Activated CD4-positive, alpha-beta T cell treated with anti-CD3 and anti-CD28 coated beads for 36 hours (primary cell): ENCODE measurements at regions of chr7 and their contacts with region 1.

Region 1: GRCh38 chr7:135942614-135943013 is 34.5 kb downstream of the MTPN start:
- DNase-seq: no peak
- ATAC-seq: peak; percentile 26
- H3K4me3 Mint-ChIP-seq: no peak overlapping the region
- H3K27ac Mint-ChIP-seq: no peak overlapping the region
- H3K4me1 Mint-ChIP-seq: peaks cover 57% of the 10 kb centered on the region
- H3K27me3 Mint-ChIP-seq: no peaks in the 10 kb centered on the region

Region 2: GRCh38 chr7:135964274-135964673 is 21.7 kb after region 1 on chr7:
- CTCF ChIA-PET with region 1: interaction called, 3 read pairs
- POLR2A ChIA-PET with region 1: no interaction called
- intact Hi-C with region 1: loop called in 1 of 2 experiments (anchors 2 kb)
- DNase-seq: no peak
- ATAC-seq: no peak
- H3K4me3 Mint-ChIP-seq: no peak overlapping the region
- H3K27ac Mint-ChIP-seq: no peak overlapping the region
- H3K4me1 Mint-ChIP-seq: peaks cover 70% of the 10 kb centered on the region
- H3K27me3 Mint-ChIP-seq: no peaks in the 10 kb centered on the region

Region 3: DNA sequence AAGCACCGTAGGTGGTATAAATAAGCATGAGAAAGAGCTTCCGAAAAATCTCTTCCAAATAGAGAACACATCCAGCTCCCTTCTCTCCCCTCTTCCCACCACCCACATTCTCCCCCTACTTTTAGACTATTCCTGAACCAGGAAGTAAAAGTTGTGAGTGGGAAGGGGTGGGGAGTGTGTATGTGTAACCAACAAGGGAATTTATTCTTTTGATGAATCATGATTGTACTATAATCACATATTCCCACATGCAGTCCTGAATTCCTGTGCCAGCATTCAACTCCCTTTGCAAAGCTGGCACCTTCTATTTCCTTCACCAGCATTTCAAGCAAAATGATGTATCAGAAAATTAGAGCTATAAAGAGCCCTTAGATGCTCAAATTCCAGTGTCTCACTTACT is 695.2 kb after region 1 on chr7:
- CTCF ChIA-PET with region 1: no interaction called
- POLR2A ChIA-PET with region 1: no interaction called
- intact Hi-C with region 1: no loop called
- DNase-seq: no peak
- ATAC-seq: no peak
- H3K4me3 Mint-ChIP-seq: no peak overlapping the region
- H3K27ac Mint-ChIP-seq: no peak overlapping the region
- H3K4me1 Mint-ChIP-seq: no peaks in the 10 kb centered on the region
- H3K27me3 Mint-ChIP-seq: no peaks in the 10 kb centered on the region